WTC11 (cell line): ENCODE measurements at regions of chr1 and their contacts with region 1.

Region 1: DNA sequence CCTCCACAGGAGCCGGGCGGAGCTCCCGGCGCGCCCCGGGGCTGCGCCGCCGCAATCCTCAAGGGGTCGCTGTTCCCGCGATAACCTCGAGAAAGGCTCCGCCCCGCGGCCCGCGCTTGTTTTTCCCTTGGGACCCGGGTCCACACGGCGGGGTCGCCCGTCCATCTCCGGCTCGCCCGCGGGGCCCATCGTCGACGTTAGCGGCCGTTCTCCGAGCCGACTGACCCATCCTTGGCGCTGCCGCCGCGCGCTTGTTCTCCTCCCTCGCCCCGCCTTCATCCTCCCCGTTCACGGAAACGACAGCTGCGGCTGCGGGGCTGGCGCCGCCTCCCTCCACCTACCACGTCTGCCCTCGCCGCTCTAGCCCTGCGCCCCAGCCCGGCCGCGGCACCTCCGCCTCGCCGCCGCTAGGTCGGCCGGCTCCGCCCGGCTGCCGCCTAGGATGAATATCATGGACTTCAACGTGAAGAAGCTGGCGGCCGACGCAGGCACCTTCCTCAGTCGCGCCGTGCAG is at the start of gene SH3GLB1:
- DNase-seq: peak; percentile 91
- ATAC-seq: peak; percentile 89
- H3K4me3 Mint-ChIP-seq: peak within 1 kb of the TSS; percentile 91
- H3K27ac Mint-ChIP-seq: peak within 1 kb of the TSS; percentile 86
- H3K4me1 Mint-ChIP-seq: peaks cover 25% of the 10 kb centered on the region
- H3K27me3 Mint-ChIP-seq: peaks cover 8% of the 10 kb centered on the region; the same call in 1 of the 2 replicates
- CTCF ChIP-seq: peak; percentile 86
- total RNA-seq, gene SH3GLB1: 32.5 to 36.4 TPM (median 33.8 TPM) in 3 replicates

Region 2: DNA sequence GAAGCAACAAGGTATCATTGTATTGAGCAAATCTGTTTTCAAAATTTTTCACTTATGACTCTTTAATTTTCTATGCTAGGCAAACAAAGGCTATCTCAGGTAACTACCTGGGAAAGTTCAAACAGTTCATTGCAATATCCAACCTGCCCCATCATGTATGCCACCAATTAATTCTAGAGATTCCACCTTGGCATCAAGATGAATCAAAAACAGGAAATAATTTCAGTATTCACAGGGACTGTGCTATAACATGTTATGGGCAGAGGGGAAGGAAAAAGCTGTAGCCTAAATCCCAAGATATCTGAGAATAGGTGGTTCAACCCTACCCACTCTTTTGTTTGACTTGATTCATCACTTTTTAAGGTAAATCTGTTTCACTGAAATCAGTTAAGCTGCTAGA is 67.6 kb before region 1 on chr1:
- CTCF ChIA-PET with region 1: interaction called, 10 read pairs
- POLR2A ChIA-PET with region 1: no interaction called
- DNase-seq: no peak
- ATAC-seq: no peak
- H3K4me3 Mint-ChIP-seq: no peak overlapping the region
- H3K27ac Mint-ChIP-seq: no peak overlapping the region
- H3K4me1 Mint-ChIP-seq: no peaks in the 10 kb centered on the region
- H3K27me3 Mint-ChIP-seq: no peaks in the 10 kb centered on the region; the same call in 1 of the 2 replicates
- CTCF ChIP-seq: no peak

Region 3: GRCh38 chr1:86687595-86687994 is 16.9 kb before region 1 on chr1:
- CTCF ChIA-PET with region 1: interaction called, 32 read pairs
- POLR2A ChIA-PET with region 1: interaction called, 3 read pairs
- DNase-seq: no peak
- ATAC-seq: no peak
- H3K4me3 Mint-ChIP-seq: no peak overlapping the region
- H3K27ac Mint-ChIP-seq: no peak overlapping the region
- H3K4me1 Mint-ChIP-seq: peaks cover 4% of the 10 kb centered on the region
- H3K27me3 Mint-ChIP-seq: no peaks in the 10 kb centered on the region; the same call in 1 of the 2 replicates
- CTCF ChIP-seq: no peak

Region 4: DNA sequence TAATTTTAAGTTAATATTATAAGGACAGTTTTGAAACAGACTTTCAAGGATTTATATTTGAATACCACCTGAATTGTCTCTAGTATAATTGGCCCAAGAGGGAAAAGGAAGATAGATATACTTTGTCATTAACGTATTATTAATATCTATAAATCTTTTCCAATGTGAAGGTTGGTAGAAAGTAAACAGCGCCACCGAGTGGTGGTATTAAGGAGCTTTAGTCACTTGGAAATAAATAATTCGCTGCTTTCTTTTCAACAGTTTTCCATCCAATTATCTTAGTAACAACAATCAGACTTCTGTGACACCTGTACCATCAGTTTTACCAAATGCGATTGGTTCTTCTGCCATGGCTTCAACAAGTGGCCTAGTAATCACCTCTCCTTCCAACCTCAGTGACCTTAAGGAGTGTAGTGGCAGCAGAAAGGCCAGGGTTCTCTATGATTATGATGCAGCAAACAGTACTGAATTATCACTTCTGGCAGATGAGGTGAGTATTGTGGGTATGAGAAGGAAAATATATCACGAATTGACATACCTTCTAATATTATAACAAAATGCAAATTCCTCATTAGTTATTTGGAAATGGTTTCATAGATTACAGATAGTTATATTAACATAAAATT is 37.5 kb after region 1 on chr1:
- CTCF ChIA-PET with region 1: interaction called, 11 read pairs
- POLR2A ChIA-PET with region 1: no interaction called
- DNase-seq: no peak
- ATAC-seq: no peak
- H3K4me3 Mint-ChIP-seq: no peak overlapping the region
- H3K27ac Mint-ChIP-seq: no peak overlapping the region
- H3K4me1 Mint-ChIP-seq: no peaks in the 10 kb centered on the region
- H3K27me3 Mint-ChIP-seq: no peaks in the 10 kb centered on the region
- CTCF ChIP-seq: peak; percentile 76

Region 5: GRCh38 chr1:86753700-86754099 is 49.2 kb after region 1 on chr1:
- CTCF ChIA-PET with region 1: interaction called, 11 read pairs
- POLR2A ChIA-PET with region 1: no interaction called
- DNase-seq: no peak
- ATAC-seq: peak; percentile 18
- H3K4me3 Mint-ChIP-seq: no peak overlapping the region
- H3K27ac Mint-ChIP-seq: no peak overlapping the region
- H3K4me1 Mint-ChIP-seq: peaks cover 26% of the 10 kb centered on the region
- H3K27me3 Mint-ChIP-seq: no peaks in the 10 kb centered on the region
- CTCF ChIP-seq: no peak